Dendritic cell treated with granulocyte-macrophage colony-stimulating factor and Interleukin-4, amounts not matched to agents 40 ng/mL and 50 ng/mL, for 4 days (primary cell): ENCODE measurements at regions of chr1 and their contacts with region 1.

Region 1: DNA sequence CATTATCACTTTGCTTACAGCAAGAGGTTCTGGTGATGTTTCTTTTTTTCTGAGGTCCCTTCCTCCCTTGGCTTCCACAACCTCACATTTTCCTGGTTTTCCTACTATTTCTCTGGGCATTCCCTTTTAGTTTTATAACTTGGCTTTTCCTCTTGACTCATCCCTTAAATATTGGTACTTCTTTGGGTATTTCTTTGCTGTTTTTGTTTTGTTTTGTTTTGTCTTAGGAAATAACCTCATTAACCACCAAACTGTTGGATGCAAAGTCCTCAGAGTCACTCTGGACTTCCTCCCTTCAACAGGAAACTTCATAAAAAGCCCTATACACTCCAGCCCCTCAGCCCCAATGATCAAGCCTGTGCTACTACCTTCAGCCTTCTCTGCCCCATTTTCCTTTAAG is 211.1 kb downstream of the DUSP10 start:
- H3K4me3 Mint-ChIP-seq: no peak overlapping the region
- H3K27ac Mint-ChIP-seq: no peak overlapping the region
- H3K4me1 Mint-ChIP-seq: peaks cover 8% of the 10 kb centered on the region
- H3K27me3 Mint-ChIP-seq: peaks cover 3% of the 10 kb centered on the region

Region 2: GRCh38 chr1:221576268-221576667 is 45.5 kb after region 1 on chr1:
- intact Hi-C with region 1: no loop called
- H3K4me3 Mint-ChIP-seq: no peak overlapping the region
- H3K27ac Mint-ChIP-seq: no peak overlapping the region
- H3K4me1 Mint-ChIP-seq: no peaks in the 10 kb centered on the region
- H3K27me3 Mint-ChIP-seq: no peaks in the 10 kb centered on the region

Region 3: DNA sequence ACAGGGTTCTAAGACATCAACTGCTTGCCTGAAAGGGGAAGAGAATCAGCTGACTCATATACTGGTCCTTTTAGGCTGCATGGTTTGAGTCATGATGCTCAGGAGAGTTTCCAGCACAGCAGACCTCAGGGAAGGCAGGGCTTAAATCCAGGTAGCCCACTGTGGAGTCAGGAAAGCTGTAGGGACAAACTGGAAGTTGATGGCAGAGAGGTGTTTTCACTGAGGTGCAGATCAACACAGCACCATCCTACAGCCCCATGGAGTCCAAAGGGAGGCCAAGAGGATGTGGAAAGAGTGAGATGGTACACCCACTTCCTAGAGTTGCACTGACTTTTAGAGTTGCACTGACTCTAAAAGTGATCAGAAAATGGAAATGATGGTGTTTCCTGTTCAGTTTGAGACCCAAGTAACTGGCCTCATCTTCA is 463.5 kb after region 1 on chr1:
- intact Hi-C with region 1: loop called (anchors 10 kb)
- H3K4me3 Mint-ChIP-seq: no peak overlapping the region
- H3K27ac Mint-ChIP-seq: no peak overlapping the region
- H3K4me1 Mint-ChIP-seq: peaks cover 37% of the 10 kb centered on the region
- H3K27me3 Mint-ChIP-seq: no peaks in the 10 kb centered on the region